ENCODE measurements at regions of chr9 and their contacts with region 1.

Region 1: GRCh38 chr9:92342825-92343488 is 17.2 kb downstream of the CENPP start:
- DNase-seq: no peak
- ATAC-seq: no peak
- H3K4me3 ChIP-seq: no peak overlapping the region
- H3K27ac ChIP-seq: no peak overlapping the region
- H3K4me1 ChIP-seq: no peaks in the 10 kb centered on the region
- H3K27me3 ChIP-seq: no peaks in the 10 kb centered on the region

Region 2: GRCh38 chr9:92438900-92439526 is 96.1 kb after region 1 on chr9:
- intact Hi-C with region 1: loop called in 2 of 4 experiments (anchors 10 kb)
- DNase-seq: no peak
- ATAC-seq: no peak
- H3K4me3 ChIP-seq: no peak overlapping the region
- H3K27ac ChIP-seq: no peak overlapping the region
- H3K4me1 ChIP-seq: no peaks in the 10 kb centered on the region
- H3K27me3 ChIP-seq: no peaks in the 10 kb centered on the region

Measured in right cardiac atrium (tissue), 5 donors.